ENCODE measurements at regions of chr11 and their contacts with region 1.

Region 1: GRCh38 chr11:32960553-32961164 is 55.0 kb upstream of the DEPDC7 start:
- DNase-seq: no peak
- H3K4me3 ChIP-seq: no peak overlapping the region
- H3K27ac ChIP-seq: peak overlapping the region in 1 of 59 donors; percentile 12
- H3K27me3 ChIP-seq: no peaks in the 10 kb centered on the region
- CTCF ChIP-seq: peak; percentile 63 to 94 (median 79)

Region 2: GRCh38 chr11:32500001-32500400 is 460.7 kb before region 1 on chr11:
- intact Hi-C with region 1: no loop called
- DNase-seq: no peak
- H3K4me3 ChIP-seq: no peak overlapping the region
- H3K27ac ChIP-seq: no peak overlapping the region
- H3K27me3 ChIP-seq: peaks cover 0 to 8% (median 0%) of the 10 kb centered on the region in 45 donors
- CTCF ChIP-seq: no peak

Region 3: DNA sequence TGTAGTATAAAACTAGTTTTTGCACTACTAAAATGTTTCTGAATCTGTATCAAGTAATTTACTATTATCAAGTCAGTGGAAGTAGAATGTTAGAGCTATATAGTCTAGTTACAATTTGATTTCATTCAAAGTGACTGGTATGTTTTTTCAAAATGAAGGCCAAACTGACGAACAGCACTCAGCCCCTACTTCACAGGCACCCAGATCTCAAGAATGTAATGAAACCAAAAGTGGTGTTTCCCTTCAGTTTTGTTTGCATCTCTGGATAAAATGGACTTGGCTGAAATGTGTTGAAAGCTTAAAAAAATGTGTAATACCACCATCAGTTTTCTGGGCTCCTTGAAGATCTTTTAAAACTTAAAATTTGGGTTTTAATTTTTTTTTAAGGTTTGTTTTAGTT is 21.6 kb before region 1 on chr11:
- intact Hi-C with region 1: no loop called
- DNase-seq: no peak
- H3K4me3 ChIP-seq: no peak overlapping the region
- H3K27ac ChIP-seq: no peak overlapping the region
- H3K27me3 ChIP-seq: no peaks in the 10 kb centered on the region
- CTCF ChIP-seq: no peak

Region 4: DNA sequence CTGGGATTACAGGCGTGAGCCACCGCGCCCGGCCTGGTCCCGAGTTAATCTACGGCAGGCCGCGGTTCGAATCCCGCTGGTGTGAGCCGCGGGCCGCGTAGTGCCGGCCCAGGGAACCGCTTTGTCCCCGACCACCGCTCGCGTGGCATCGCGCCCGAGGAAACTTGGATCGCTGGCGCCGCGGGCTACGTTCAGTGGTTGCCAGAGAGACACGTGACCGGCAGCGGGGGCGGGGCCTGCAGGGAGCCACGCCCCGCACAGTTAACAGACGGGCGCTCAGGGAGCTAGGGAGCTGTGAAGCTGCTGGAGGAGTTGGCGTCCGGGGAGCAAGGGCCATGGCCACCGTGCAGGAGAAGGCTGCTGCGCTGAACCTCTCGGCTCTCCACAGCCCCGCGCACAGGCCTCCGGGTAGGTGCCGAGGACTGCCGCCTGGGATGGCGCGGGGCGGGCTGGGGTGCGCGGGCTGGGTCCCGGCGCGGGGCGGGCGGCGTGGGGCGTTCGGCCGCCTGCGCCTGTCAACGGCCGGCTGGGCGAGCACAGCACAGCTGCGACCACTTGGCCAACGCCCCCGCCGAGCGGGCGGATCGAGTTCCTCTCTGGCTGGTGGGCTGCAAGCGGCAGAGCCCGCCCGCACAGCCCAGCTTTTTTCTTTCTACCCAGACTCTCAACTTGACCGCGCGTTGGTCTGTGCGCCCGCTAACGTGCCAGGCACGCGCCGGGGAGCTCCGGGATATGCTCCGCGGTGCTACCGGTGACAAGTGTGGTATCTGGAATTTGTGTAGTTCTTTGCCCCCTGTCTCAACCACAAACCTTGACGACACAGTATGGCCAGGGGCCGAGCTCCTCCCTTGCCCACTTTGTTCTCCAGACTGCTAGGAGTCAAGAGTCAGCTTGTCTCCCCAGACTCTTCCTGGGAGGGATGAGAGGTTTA is 55.2 kb after region 1 on chr11 and contains the start of gene DEPDC7:
- intact Hi-C with region 1: loop called in 1 of 2 experiments (anchors 10 kb)
- DNase-seq: peak; percentile 54 to 94 (median 90)
- H3K4me3 ChIP-seq: peak within 1 kb of the TSS; percentile 40 to 86 (median 69)
- H3K27ac ChIP-seq: peak within 1 kb of the TSS in 41 of 59 donors; percentile 0 to 78 (median 61)
- H3K27me3 ChIP-seq: peaks cover 0 to 4% (median 0%) of the 10 kb centered on the region in 45 donors
- CTCF ChIP-seq: peak in 1 of 56 donors; percentile 5
- total RNA-seq, gene DEPDC7: 0.35 to 9.8 (median 2.9) TPM

Region 5: DNA sequence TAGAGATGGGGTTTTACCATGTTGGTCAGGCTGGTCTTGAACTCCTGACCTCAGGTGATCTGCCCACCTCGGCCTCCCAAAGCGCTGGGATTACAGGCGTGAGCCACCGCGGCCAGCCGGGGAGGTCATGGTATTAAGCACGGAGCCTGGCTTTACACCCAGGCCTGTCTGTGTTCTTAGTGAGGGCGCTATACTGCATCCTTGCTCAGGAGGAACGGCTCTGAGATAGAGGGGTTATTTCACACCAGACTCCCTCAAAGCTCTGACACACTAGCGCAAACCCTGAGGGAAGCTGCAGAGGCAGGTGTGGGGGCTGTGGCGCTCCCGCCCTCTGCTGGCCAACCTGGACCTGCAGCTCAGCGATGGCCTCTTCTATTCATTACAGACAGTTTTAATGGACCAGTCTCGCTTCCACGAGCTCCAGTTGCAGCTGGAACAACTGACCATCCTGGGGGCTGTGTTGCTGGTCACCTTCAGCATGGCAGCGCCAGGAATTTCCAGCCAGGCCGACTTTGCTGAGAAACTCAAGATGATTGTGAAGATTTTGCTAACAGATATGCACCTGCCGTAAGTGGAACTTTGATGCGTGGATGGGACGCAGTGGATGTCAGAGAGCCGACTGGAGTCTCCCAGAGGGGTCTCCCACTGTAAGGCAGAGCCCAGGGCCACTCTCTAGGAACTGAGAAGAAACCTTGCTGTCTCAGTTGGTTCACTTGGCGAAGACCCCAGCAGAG is 105.0 kb after region 1 on chr11:
- intact Hi-C with region 1: loop called (anchors 2 kb)
- DNase-seq: peak; percentile 26 to 81 (median 66)
- H3K4me3 ChIP-seq: no peak overlapping the region
- H3K27ac ChIP-seq: peak overlapping the region in 1 of 59 donors; percentile 13
- H3K27me3 ChIP-seq: no peaks in the 10 kb centered on the region
- CTCF ChIP-seq: peak; percentile 39 to 89 (median 79)

Region 6: GRCh38 chr11:33089776-33090175 is 129.1 kb after region 1 on chr11:
- intact Hi-C with region 1: no loop called
- DNase-seq: no peak
- H3K4me3 ChIP-seq: no peak overlapping the region
- H3K27ac ChIP-seq: no peak overlapping the region
- H3K27me3 ChIP-seq: no peaks in the 10 kb centered on the region
- CTCF ChIP-seq: no peak

Region 7: DNA sequence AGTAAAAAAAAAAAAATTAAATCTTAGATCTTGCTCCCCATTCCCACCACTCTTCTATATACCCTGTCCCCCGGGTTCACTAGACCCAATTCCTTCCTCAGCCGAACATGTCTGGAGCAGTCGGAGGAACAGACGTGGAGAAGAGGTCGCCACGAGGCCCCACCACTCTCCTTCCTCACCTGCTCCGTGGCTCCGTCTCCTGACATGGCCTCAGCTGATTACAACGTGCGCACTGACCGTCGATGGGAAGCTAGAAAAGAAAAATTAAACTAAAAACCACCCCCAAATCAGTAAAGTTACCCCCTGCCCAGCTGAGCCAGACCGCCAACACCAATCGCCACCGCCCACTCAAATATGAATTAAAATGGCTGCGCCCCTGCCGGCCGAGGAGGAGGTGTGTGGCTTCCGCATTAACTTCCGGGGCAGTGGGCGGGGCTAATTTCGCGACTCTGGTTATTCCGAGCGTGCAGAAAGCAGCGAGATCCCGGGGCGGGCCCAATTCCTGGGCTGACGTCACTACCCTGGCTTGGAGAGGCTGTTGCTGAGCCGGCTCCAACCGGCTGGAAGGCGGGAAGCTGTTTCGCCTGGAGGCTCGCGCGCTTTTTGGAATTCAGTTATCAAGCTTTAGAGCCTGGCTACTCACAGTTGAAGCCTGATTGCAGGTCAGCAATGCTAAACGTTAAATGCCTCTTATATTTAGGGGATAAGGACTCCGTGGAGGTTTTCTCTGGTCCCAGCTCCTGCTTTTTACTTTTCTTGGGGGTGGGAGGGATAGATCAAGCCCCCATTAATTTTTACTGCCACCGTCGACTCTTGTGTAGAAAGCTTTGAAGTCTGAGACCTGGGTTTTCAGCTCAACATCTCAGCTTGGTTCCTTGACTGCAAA is 200.7 kb after region 1 on chr11 and contains the start of gene CSTF3:
- intact Hi-C with region 1: loop called in 1 of 2 experiments (anchors 10 kb)
- DNase-seq: peak; percentile 100
- H3K4me3 ChIP-seq: peak within 1 kb of the TSS; percentile 63 to 97 (median 86)
- H3K27ac ChIP-seq: peak within 1 kb of the TSS; percentile 41 to 95 (median 87)
- H3K27me3 ChIP-seq: no peaks in the 10 kb centered on the region
- CTCF ChIP-seq: peak in 55 of 56 donors; percentile 19 to 76 (median 58)
- total RNA-seq, gene CSTF3: 20.9 to 50.5 (median 35.5) TPM

Measured in dorsolateral prefrontal cortex (tissue), 120 donors.